ENCODE measurements at regions of chr4 and their contacts with region 1.

Region 1: GRCh38 chr4:146342600-146343192 is 128.4 kb downstream of the REELD1 start:
- DNase-seq: no peak
- ATAC-seq: no peak
- H3K4me3 ChIP-seq: no peak overlapping the region
- H3K27ac ChIP-seq: no peak overlapping the region
- H3K4me1 ChIP-seq: no peaks in the 10 kb centered on the region
- H3K27me3 ChIP-seq: no peaks in the 10 kb centered on the region
- CTCF ChIP-seq: peak; percentile 52 to 79 (median 70)
- POLR2A ChIP-seq: no peak

Region 2: DNA sequence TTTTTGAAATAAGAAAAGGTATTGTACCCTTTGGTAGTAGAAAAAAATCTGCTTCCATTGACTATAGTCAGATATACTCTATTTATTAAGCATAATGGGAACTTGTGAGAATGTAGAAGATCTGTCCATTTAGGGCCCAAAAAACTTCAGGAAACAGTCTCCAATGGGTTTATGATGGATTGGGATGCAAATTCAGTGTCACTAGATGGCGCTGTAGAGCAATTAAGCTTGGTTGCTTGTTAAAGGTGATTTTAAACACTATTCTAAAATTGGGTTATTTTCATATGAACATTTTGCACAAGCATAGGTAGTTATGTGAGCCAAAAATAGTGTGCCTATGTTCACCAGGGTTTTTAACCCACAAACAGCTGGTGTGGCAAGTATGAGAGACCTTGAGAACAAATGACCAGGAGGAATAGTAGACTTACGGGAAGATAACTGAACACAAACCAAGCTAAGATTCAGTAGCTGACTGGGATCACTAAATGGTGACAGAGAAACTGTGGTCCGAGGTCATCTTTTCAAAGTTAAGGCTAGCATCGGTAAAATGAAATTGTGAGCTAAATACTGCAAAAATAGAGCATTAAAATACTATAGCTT is 247.5 kb before region 1 on chr4:
- intact Hi-C with region 1: loop called in 4 of 10 experiments (anchors 5 to 10 kb)
- DNase-seq: no peak
- ATAC-seq: no peak
- H3K4me3 ChIP-seq: no peak overlapping the region
- H3K27ac ChIP-seq: no peak overlapping the region
- H3K4me1 ChIP-seq: no peaks in the 10 kb centered on the region
- H3K27me3 ChIP-seq: no peaks in the 10 kb centered on the region
- CTCF ChIP-seq: peak; percentile 54 to 73 (median 66)
- POLR2A ChIP-seq: no peak

Region 3: DNA sequence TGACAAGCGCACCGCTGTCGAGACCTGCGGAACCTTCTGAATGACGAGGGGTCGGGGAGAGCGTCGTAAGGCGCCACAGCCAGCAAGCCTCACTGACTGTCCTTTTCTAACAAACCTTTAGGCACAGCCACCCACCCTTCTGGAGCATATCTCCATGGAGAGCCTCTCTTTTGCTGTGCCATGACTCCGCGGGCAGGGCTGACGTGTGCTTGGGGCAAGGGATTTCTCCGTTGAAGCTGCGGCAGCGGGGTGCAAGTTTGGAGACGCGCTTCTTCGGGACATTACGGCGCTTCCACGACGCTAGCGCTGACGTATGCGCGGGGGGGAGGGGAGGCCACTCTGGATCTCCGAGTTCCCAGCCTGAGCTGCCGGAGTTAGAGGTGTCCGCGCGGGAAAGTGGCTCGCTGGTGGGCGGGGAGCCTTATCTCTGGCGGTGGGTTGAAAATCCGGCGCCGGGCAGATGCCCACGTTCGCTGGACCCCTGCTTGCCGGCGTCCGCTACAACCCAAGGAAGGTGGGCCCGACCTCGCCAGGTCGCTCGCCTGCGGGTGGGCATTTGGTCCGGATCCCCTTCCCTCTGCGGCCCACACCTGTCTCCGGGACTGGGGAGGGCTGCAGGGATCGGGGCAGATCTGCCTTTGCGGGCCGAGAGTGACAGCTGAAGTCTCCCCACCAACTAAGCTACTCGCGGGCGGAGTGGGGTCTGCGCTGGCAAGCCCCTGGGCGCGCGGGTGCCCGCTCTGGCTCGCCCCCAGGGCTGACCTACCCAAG is 179.6 kb after region 1 on chr4:
- intact Hi-C with region 1: loop called in 2 of 10 experiments (anchors 2 to 10 kb)
- DNase-seq: peak; percentile 90 to 94 (median 92)
- ATAC-seq: peak; percentile 96 to 99 (median 99)
- H3K4me3 ChIP-seq: peak overlapping the region; percentile 66 to 99 (median 96)
- H3K27ac ChIP-seq: peak overlapping the region; percentile 19 to 90 (median 80)
- H3K4me1 ChIP-seq: peaks cover 0 to 24% (median 18%) of the 10 kb centered on the region in 12 donors
- H3K27me3 ChIP-seq: no peaks in the 10 kb centered on the region
- CTCF ChIP-seq: no peak
- POLR2A ChIP-seq: peak in 1 of 2 donors; percentile 72

Region 4: GRCh38 chr4:146654687-146655520 is 312.2 kb after region 1 on chr4:
- intact Hi-C with region 1: loop called in 3 of 10 experiments (anchors 10 kb)
- DNase-seq: peak in 1 of 5 donors; percentile 28
- ATAC-seq: peak in 3 of 4 donors; percentile 64 to 81 (median 71)
- H3K4me3 ChIP-seq: peak overlapping the region; percentile 20 to 62 (median 48)
- H3K27ac ChIP-seq: no peak overlapping the region
- H3K4me1 ChIP-seq: peaks cover 0 to 14% (median 5%) of the 10 kb centered on the region in 12 donors
- H3K27me3 ChIP-seq: peaks cover 8 to 86% (median 38%) of the 10 kb centered on the region in 9 donors
- CTCF ChIP-seq: peak in 4 of 12 donors; percentile 10 to 33 (median 22)
- POLR2A ChIP-seq: no peak

Region 5: GRCh38 chr4:147019061-147019460 is 676.4 kb after region 1 on chr4:
- intact Hi-C with region 1: loop called in 1 of 10 experiments (anchors 10 kb)
- DNase-seq: peak; percentile 38 to 70 (median 55)
- ATAC-seq: peak; percentile 71 to 85 (median 80)
- H3K4me3 ChIP-seq: no peak overlapping the region
- H3K27ac ChIP-seq: no peak overlapping the region
- H3K4me1 ChIP-seq: no peaks in the 10 kb centered on the region
- H3K27me3 ChIP-seq: no peaks in the 10 kb centered on the region
- CTCF ChIP-seq: peak; percentile 49 to 79 (median 68)
- POLR2A ChIP-seq: no peak

Region 6: GRCh38 chr4:147103403-147103946 is 760.8 kb after region 1 on chr4:
- intact Hi-C with region 1: loop called (anchors 5 to 10 kb)
- DNase-seq: peak in 4 of 5 donors; percentile 37 to 81 (median 53)
- ATAC-seq: peak; percentile 82 to 98 (median 93)
- H3K4me3 ChIP-seq: no peak overlapping the region
- H3K27ac ChIP-seq: peak overlapping the region in 10 of 12 donors; percentile 3 to 68 (median 48)
- H3K4me1 ChIP-seq: peaks cover 0 to 23% (median 10%) of the 10 kb centered on the region in 12 donors
- H3K27me3 ChIP-seq: no peaks in the 10 kb centered on the region
- CTCF ChIP-seq: no peak
- POLR2A ChIP-seq: no peak

Measured in heart left ventricle (tissue), 16 donors.